Tibial artery (tissue), 4 donors: ENCODE measurements at regions of chr12 and their contacts with region 1.

Region 1: GRCh38 chr12:113912760-113913329 is 53.3 kb downstream of the RBM19 start:
- DNase-seq: peak in 1 of 2 donors; percentile 36
- H3K4me3 ChIP-seq: no peak overlapping the region
- H3K27ac ChIP-seq: no peak overlapping the region
- H3K4me1 ChIP-seq: no peaks in the 10 kb centered on the region
- H3K27me3 ChIP-seq: no peaks in the 10 kb centered on the region
- CTCF ChIP-seq: peak; percentile 71 to 74

Region 2: DNA sequence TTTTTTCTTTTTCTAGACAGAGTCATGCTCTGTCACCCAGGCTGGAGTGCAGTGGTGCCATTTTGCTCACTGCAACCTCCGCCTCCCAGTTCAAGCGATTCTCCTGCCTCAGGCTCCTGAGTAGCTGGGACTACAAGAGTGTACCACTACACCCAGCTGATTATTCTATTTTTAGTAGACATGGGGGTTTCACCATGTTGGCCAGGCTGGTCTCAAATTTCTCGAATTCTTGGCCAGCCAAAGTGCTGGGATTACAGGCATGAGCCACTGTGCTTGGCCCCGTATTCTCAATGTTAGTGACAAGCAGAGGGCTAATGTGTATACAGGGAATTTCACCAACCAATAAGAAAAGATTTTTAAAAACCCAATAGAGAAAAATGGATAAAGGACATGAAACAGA is 546.0 kb before region 1 on chr12:
- intact Hi-C with region 1: no loop called
- DNase-seq: no peak
- H3K4me3 ChIP-seq: no peak overlapping the region
- H3K27ac ChIP-seq: no peak overlapping the region
- H3K4me1 ChIP-seq: peaks cover 0 to 19% (median 8%) of the 10 kb centered on the region in 4 donors
- H3K27me3 ChIP-seq: no peaks in the 10 kb centered on the region
- CTCF ChIP-seq: no peak

Region 3: GRCh38 chr12:113467502-113468364 is 445.1 kb before region 1 on chr12:
- intact Hi-C with region 1: loop called (anchors 5 kb)
- DNase-seq: no peak
- H3K4me3 ChIP-seq: peak overlapping the region; percentile 15 to 44
- H3K27ac ChIP-seq: no peak overlapping the region
- H3K4me1 ChIP-seq: peaks cover 0 to 65% (median 53%) of the 10 kb centered on the region in 4 donors
- H3K27me3 ChIP-seq: peaks cover 10 to 100% of the 10 kb centered on the region in 2 donors
- CTCF ChIP-seq: no peak

Region 4: GRCh38 chr12:114038962-114039361 is 126.1 kb after region 1 on chr12:
- intact Hi-C with region 1: no loop called
- DNase-seq: no peak
- H3K4me3 ChIP-seq: no peak overlapping the region
- H3K27ac ChIP-seq: no peak overlapping the region
- H3K4me1 ChIP-seq: no peaks in the 10 kb centered on the region
- H3K27me3 ChIP-seq: peaks cover 0 to 14% of the 10 kb centered on the region in 2 donors
- CTCF ChIP-seq: no peak